Activated CD4-positive, alpha-beta T cell treated with anti-CD3 and anti-CD28 coated beads for 36 hours (primary cell): ENCODE measurements at regions of chr20 and their contacts with region 1.

Region 1: GRCh38 chr20:52972190-52972937 is at the start of gene TSHZ2:
- DNase-seq: peak; percentile 75
- ATAC-seq: peak; percentile 49
- H3K4me3 Mint-ChIP-seq: peak within 1 kb of the TSS; percentile 79
- H3K27ac Mint-ChIP-seq: peak within 1 kb of the TSS; percentile 94
- H3K4me1 Mint-ChIP-seq: peaks cover 41% of the 10 kb centered on the region
- H3K27me3 Mint-ChIP-seq: peaks cover 8% of the 10 kb centered on the region
- total RNA-seq, gene TSHZ2: 25.9 to 43.6 TPM

Region 2: GRCh38 chr20:52410182-52410647 is 562.1 kb before region 1 on chr20:
- CTCF ChIA-PET with region 1: no interaction called
- POLR2A ChIA-PET with region 1: no interaction called
- intact Hi-C with region 1: loop called in 1 of 2 experiments (anchors 5 kb)
- DNase-seq: peak; percentile 61
- ATAC-seq: peak; percentile 85
- H3K4me3 Mint-ChIP-seq: peak overlapping the region; percentile 53
- H3K27ac Mint-ChIP-seq: peak overlapping the region; percentile 84
- H3K4me1 Mint-ChIP-seq: peaks cover 66% of the 10 kb centered on the region
- H3K27me3 Mint-ChIP-seq: no peaks in the 10 kb centered on the region

Region 3: GRCh38 chr20:52586660-52587059 is 385.7 kb before region 1 on chr20:
- CTCF ChIA-PET with region 1: no interaction called
- POLR2A ChIA-PET with region 1: no interaction called
- intact Hi-C with region 1: no loop called
- DNase-seq: no peak
- ATAC-seq: no peak
- H3K4me3 Mint-ChIP-seq: no peak overlapping the region
- H3K27ac Mint-ChIP-seq: no peak overlapping the region
- H3K4me1 Mint-ChIP-seq: peaks cover 3% of the 10 kb centered on the region
- H3K27me3 Mint-ChIP-seq: no peaks in the 10 kb centered on the region

Region 4: GRCh38 chr20:52905241-52905994 is 66.9 kb before region 1 on chr20:
- CTCF ChIA-PET with region 1: no interaction called
- POLR2A ChIA-PET with region 1: no interaction called
- intact Hi-C with region 1: no loop called
- DNase-seq: no peak
- ATAC-seq: no peak
- H3K4me3 Mint-ChIP-seq: no peak overlapping the region
- H3K27ac Mint-ChIP-seq: no peak overlapping the region
- H3K4me1 Mint-ChIP-seq: no peaks in the 10 kb centered on the region
- H3K27me3 Mint-ChIP-seq: peaks cover 8% of the 10 kb centered on the region

Region 5: GRCh38 chr20:53021934-53022333 is 49.6 kb after region 1 on chr20:
- CTCF ChIA-PET with region 1: interaction called, 3 read pairs
- POLR2A ChIA-PET with region 1: interaction called, 18 read pairs
- intact Hi-C with region 1: loop called (anchors 1 kb)
- DNase-seq: peak; percentile 22
- ATAC-seq: peak; percentile 84
- H3K4me3 Mint-ChIP-seq: peak overlapping the region; percentile 41
- H3K27ac Mint-ChIP-seq: peak overlapping the region; percentile 97
- H3K4me1 Mint-ChIP-seq: peaks cover 78% of the 10 kb centered on the region
- H3K27me3 Mint-ChIP-seq: no peaks in the 10 kb centered on the region

Region 6: GRCh38 chr20:53077373-53078205 is 105.2 kb after region 1 on chr20:
- CTCF ChIA-PET with region 1: interaction called, 5 read pairs
- POLR2A ChIA-PET with region 1: interaction called, 7 read pairs
- intact Hi-C with region 1: loop called (anchors 1 to 2 kb)
- DNase-seq: peak; percentile 56
- ATAC-seq: peak; percentile 80
- H3K4me3 Mint-ChIP-seq: no peak overlapping the region
- H3K27ac Mint-ChIP-seq: no peak overlapping the region
- H3K4me1 Mint-ChIP-seq: peaks cover 44% of the 10 kb centered on the region
- H3K27me3 Mint-ChIP-seq: peaks cover 3% of the 10 kb centered on the region

Region 7: GRCh38 chr20:53149148-53149889 is 177.0 kb after region 1 on chr20:
- CTCF ChIA-PET with region 1: interaction called, 3 read pairs
- POLR2A ChIA-PET with region 1: interaction called, 30 read pairs
- intact Hi-C with region 1: loop called (anchors 1 to 2 kb)
- DNase-seq: no peak
- ATAC-seq: no peak
- H3K4me3 Mint-ChIP-seq: no peak overlapping the region
- H3K27ac Mint-ChIP-seq: peak overlapping the region; percentile 76
- H3K4me1 Mint-ChIP-seq: peaks cover 66% of the 10 kb centered on the region
- H3K27me3 Mint-ChIP-seq: peaks cover 3% of the 10 kb centered on the region

Region 8: GRCh38 chr20:53216856-53217576 is 244.7 kb after region 1 on chr20:
- CTCF ChIA-PET with region 1: no interaction called
- POLR2A ChIA-PET with region 1: interaction called, 10 read pairs
- intact Hi-C with region 1: loop called (anchors 2 kb)
- DNase-seq: peak; percentile 89
- ATAC-seq: peak; percentile 55
- H3K4me3 Mint-ChIP-seq: peak overlapping the region; percentile 36
- H3K27ac Mint-ChIP-seq: peak overlapping the region; percentile 84
- H3K4me1 Mint-ChIP-seq: peaks cover 54% of the 10 kb centered on the region
- H3K27me3 Mint-ChIP-seq: no peaks in the 10 kb centered on the region